Psoas muscle (tissue), 8 donors: ENCODE measurements at regions of chr10 and their contacts with region 1.

Region 1: GRCh38 chr10:17562614-17563013 is 54.6 kb downstream of the HACD1 start:
- DNase-seq: no peak
- ATAC-seq: peak; percentile 93 to 98 (median 96)
- H3K4me3 ChIP-seq: no peak overlapping the region
- H3K27ac ChIP-seq: peak overlapping the region; percentile 74
- H3K4me1 ChIP-seq: peaks cover 17% of the 10 kb centered on the region
- H3K27me3 ChIP-seq: no peaks in the 10 kb centered on the region
- CTCF ChIP-seq: no peak

Region 2: DNA sequence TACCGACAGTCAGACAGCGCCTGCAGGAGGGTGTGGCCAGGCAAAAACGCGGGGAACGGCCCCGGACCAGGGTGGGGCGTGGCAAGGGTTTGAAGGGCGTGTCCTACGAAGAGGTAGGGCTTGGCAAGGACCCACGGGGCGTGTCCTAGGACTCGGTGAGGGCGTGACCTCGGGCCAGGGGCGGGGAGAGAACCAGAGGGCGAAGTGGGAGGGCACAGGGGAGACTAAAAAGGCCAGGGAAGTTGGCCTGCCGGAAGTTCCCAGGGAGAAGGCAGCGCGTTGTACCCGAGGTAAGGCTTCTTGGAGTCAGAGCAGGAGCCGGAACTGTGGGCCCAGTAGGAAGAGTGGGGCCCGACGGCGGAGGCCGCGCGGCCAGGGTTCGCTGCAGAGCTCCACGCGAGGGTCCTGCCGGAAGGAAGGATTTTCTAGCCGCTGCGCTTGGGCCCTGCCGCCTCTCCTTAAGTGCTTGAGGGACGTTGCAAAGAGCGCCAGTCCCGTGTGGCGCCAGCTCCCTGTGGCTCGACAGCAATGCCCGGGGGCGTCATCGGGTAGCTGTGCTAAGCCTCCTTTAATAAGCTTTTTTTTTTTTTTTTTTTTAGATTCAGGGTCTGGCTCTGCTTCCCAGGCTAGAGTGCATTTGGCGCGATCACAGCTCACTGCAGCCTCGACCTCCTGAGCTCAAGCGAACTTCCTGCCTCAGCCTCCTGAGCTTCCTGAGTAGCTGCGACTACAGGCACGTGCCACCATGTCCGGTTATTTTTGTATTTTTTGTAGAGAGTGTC is 1125.7 kb before region 1 on chr10 and contains the start of gene PTER:
- intact Hi-C with region 1: loop called in 1 of 2 experiments (anchors 5 kb)
- DNase-seq: peak; percentile 97 to 99
- ATAC-seq: peak; percentile 98 to 99 (median 98)
- H3K4me3 ChIP-seq: peak within 1 kb of the TSS; percentile 92
- H3K27ac ChIP-seq: peak within 1 kb of the TSS; percentile 93
- H3K4me1 ChIP-seq: peaks cover 41% of the 10 kb centered on the region
- H3K27me3 ChIP-seq: no peaks in the 10 kb centered on the region
- CTCF ChIP-seq: no peak
- total RNA-seq, gene PTER: 6.7 to 10.3 (median 6.8) TPM